Heart right ventricle (tissue), 16 donors: ENCODE measurements at regions of chr17 and their contacts with region 1.

Region 1: DNA sequence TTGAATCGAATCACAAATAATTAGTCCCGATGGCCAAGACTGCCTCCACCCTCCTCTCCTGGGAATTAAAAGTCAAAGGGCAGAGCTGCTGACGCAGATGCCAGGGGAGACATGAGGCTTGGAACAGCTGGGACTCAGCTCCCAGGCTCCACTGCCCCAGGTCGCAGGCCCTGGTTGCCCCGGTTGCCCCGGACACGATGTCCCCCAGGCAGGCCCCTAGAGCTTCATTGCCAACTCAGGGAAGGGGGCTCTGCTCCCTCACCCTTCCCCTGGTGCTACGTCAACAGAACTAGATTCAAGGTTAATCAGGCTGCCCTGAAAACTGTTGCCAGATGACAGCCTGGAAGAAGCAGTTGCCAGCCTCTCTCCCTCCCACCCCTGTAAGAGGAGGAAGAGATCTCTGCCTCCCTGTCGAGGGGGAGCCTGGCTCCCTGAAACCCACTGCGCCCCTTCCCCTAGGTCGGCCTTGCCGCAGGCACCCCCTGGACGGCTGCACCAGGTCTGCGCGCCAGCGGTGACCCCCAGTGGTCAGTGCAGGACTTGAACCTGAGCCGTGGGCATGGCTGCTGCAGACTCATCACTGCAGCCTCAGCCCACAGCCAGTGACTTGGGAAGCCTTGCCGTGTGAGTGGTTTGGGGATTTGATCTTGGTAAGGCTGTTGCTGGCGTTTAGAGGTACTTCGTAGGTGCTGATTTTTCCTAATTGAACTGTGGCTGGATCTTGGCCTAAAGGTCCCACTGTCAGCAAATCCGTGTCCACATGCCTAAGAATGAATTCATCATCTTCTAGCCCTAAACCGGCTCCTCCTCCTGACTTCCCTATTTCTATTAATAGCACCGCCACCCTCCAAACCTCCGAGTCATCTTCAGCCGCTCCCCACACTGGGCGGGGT is 84.1 kb upstream of the TOB1 start:
- DNase-seq: peak; percentile 77 to 80
- ATAC-seq: peak; percentile 77 to 89 (median 85)
- H3K4me3 ChIP-seq: peak overlapping the region in 3 of 10 donors; percentile 0 to 5 (median 2)
- H3K27ac ChIP-seq: peak overlapping the region; percentile 44 to 88 (median 79)
- H3K4me1 ChIP-seq: peaks cover 22 to 64% (median 51%) of the 10 kb centered on the region in 9 donors
- H3K27me3 ChIP-seq: no peaks in the 10 kb centered on the region
- CTCF ChIP-seq: peak; percentile 75 to 93 (median 85)

Region 2: GRCh38 chr17:49343273-49343672 is 1607.0 kb before region 1 on chr17:
- intact Hi-C with region 1: loop called in 1 of 10 experiments (anchors 10 kb)
- DNase-seq: no peak
- ATAC-seq: no peak
- H3K4me3 ChIP-seq: no peak overlapping the region
- H3K27ac ChIP-seq: peak overlapping the region in 1 of 10 donors; percentile 45
- H3K4me1 ChIP-seq: peaks cover 0 to 53% (median 21%) of the 10 kb centered on the region in 9 donors
- H3K27me3 ChIP-seq: no peaks in the 10 kb centered on the region
- CTCF ChIP-seq: no peak

Region 3: GRCh38 chr17:50783193-50783660 is 167.0 kb before region 1 on chr17:
- intact Hi-C with region 1: loop called in 9 of 10 experiments (anchors 2 to 10 kb)
- DNase-seq: peak; percentile 86
- ATAC-seq: peak; percentile 82 to 91 (median 84)
- H3K4me3 ChIP-seq: no peak overlapping the region
- H3K27ac ChIP-seq: no peak overlapping the region
- H3K4me1 ChIP-seq: peaks cover 0 to 25% (median 3%) of the 10 kb centered on the region in 9 donors
- H3K27me3 ChIP-seq: peaks cover 0 to 4% (median 0%) of the 10 kb centered on the region in 7 donors
- CTCF ChIP-seq: peak; percentile 94 to 98 (median 96)

Region 4: GRCh38 chr17:50853015-50853615 is 97.1 kb before region 1 on chr17:
- intact Hi-C with region 1: loop called in 9 of 10 experiments (anchors 1 to 5 kb)
- DNase-seq: no peak
- ATAC-seq: peak in 1 of 8 donors; percentile 2
- H3K4me3 ChIP-seq: peak overlapping the region in 1 of 10 donors; percentile 47
- H3K27ac ChIP-seq: peak overlapping the region in 8 of 10 donors; percentile 39 to 92 (median 82)
- H3K4me1 ChIP-seq: peaks cover 0 to 46% (median 18%) of the 10 kb centered on the region in 9 donors
- H3K27me3 ChIP-seq: no peaks in the 10 kb centered on the region
- CTCF ChIP-seq: no peak

Region 5: DNA sequence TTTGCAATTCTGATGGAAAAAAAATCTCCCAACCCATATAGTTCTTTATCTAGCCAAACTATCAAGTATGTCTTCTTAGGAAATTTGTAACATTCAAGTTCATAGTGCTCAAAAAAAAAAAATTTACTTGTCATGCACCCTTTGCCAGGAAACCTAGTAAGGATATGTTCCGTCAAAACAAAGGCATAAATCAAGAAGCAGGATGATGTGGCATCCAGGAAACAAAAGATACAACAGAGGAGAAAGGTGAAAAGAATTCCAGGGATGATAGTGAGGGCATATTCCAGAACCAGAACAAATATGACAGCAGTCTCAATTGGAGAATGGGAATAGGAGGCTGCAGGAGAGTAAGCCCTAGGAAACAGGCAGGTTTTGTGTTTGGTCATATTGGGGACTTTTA is 65.9 kb after region 1 on chr17:
- intact Hi-C with region 1: no loop called
- DNase-seq: no peak
- ATAC-seq: no peak
- H3K4me3 ChIP-seq: no peak overlapping the region
- H3K27ac ChIP-seq: peak overlapping the region in 1 of 10 donors; percentile 51
- H3K4me1 ChIP-seq: peaks cover 0 to 9% (median 0%) of the 10 kb centered on the region in 9 donors
- H3K27me3 ChIP-seq: no peaks in the 10 kb centered on the region
- CTCF ChIP-seq: no peak